Left ventricle myocardium superior (tissue), 1 donor: ENCODE measurements at regions of chr12 and their contacts with region 1.

Region 1: DNA sequence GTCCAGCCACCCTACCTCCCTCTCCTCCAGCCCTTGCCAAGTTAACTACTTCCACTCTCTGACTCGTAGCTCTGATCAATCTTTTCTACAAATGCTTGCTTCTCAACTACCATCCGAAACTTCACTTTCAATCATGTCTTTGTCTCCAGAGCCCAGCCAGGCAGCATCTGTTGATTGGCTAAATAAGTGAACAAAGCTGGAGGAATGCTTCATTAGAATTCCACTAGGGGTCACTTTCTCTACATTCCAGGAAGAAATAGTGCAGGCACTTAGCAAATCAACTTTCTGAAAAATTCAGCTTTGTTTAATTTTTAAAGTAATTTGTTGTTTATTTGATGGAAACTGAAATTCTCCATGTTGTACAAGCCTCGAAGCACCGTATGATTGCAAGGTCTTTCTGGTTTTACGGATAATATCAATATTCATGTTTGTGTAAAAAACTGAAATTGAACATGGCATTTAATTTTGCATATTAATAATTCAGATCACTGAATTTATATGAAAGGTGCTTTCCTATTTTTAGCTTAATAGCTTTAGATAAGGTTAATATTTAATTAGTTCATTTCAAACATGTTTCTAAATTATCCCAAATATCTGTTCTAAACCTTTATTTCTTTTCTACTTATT is 32.4 kb upstream of the HELB start:
- DNase-seq: no peak
- ATAC-seq: peak; percentile 34

Region 2: DNA sequence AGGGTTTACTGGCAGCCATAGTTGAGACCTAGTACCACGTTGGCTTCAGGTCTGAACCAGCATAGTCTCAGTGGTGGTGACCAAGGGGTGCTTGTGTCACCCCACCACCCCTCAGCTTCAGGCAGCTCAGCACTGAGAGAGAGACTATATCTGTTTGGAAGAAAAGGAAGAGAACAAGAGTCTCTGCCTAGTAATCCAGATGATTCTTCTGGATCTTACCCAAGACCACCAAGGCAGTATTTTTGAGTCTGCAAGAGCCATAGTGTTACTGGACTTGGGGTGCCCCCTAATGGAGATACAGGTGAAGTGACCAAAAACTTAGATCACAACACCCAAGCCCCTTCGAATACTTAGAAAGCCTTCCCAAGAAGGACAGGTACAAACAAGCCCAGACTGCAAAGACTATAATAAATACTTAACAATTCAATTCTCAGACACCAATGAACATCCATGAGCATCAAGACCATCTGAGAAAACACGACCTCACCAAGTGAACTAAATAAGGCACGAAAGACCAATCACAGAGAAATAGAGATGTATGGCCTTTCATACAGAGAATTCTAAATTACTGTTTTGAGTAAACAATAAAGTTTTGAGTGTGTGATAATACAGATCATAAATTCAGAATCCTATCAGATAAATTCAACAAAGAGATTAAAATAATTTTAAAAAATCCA is 139.5 kb after region 1 on chr12:
- intact Hi-C with region 1: loop called (anchors 10 kb)
- DNase-seq: no peak
- ATAC-seq: peak; percentile 37